ENCODE measurements at regions of chr1 and their contacts with region 1.

Region 1: GRCh38 chr1:115275212-115275611 is 62.8 kb downstream of the NGF start:
- DNase-seq: no peak
- H3K4me3 ChIP-seq: no peak overlapping the region
- H3K27ac ChIP-seq: no peak overlapping the region
- H3K4me1 ChIP-seq: no peaks in the 10 kb centered on the region
- H3K27me3 ChIP-seq: no peaks in the 10 kb centered on the region
- CTCF ChIP-seq: peak in 2 of 3 experiments; percentile 44 to 67; a peak in 3 of 4 replicates
- EP300 ChIP-seq: no peak
- POLR2A ChIP-seq: no peak
- RAD21 ChIP-seq: peak; percentile 75

Region 2: GRCh38 chr1:115296981-115297380 is 21.8 kb after region 1 on chr1:
- CTCF ChIA-PET with region 1: interaction called, 34 read pairs
- POLR2A ChIA-PET with region 1: no interaction called
- DNase-seq: no peak
- H3K4me3 ChIP-seq: no peak overlapping the region
- H3K27ac ChIP-seq: no peak overlapping the region
- H3K4me1 ChIP-seq: peaks cover 0 to 7% (median 3%) of the 10 kb centered on the region in 4 experiments; a peak in 3 of 7 replicates
- H3K27me3 ChIP-seq: 0 out of 7 replicates have a peak, but pooled peaks cover 0 to 1% (median 0%) of the 10 kb centered on the region in 4 experiments
- CTCF ChIP-seq: no peak
- EP300 ChIP-seq: no peak
- POLR2A ChIP-seq: no peak
- RAD21 ChIP-seq: no peak

Region 3: DNA sequence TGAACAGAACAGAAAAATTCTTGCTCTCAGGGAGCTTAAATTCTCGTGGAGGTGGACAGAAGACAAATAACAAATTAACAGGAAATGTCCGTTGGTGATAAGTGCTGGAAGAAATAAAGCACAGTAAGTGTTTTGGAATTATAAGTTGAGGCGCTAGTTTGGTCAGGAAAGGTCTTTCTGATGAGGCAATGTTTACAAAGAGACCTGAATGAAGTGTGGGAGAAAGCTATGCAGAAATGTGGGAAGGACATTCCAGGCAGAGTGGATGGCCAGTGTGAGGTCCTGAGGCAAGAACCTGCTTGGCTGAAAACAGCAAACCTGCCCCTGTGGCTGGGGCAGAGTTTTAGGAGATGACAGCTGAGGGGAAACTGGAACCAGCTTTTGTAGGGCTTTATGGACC is 39.6 kb after region 1 on chr1:
- CTCF ChIA-PET with region 1: interaction called, 11 read pairs
- POLR2A ChIA-PET with region 1: no interaction called
- DNase-seq: no peak
- H3K4me3 ChIP-seq: no peak overlapping the region
- H3K27ac ChIP-seq: no peak overlapping the region
- H3K4me1 ChIP-seq: no peaks in the 10 kb centered on the region
- H3K27me3 ChIP-seq: no peaks in the 10 kb centered on the region; a peak in 1 of 7 replicates
- CTCF ChIP-seq: no peak
- EP300 ChIP-seq: no peak
- POLR2A ChIP-seq: no peak
- RAD21 ChIP-seq: no peak

Region 4: GRCh38 chr1:115337633-115338456 is 62.6 kb after region 1 on chr1 and contains the start of gene NGF:
- CTCF ChIA-PET with region 1: interaction called, 12 read pairs
- POLR2A ChIA-PET with region 1: interaction called, 3 read pairs
- DNase-seq: peak; percentile 63 to 82
- H3K4me3 ChIP-seq: peak within 1 kb of the TSS; percentile 55 to 83 (median 72)
- H3K27ac ChIP-seq: no peak within 1 kb of the TSS
- H3K4me1 ChIP-seq: peaks cover 0 to 7% (median 0%) of the 10 kb centered on the region in 4 experiments; a peak in 4 of 7 replicates
- H3K27me3 ChIP-seq: peaks cover 7 to 38% (median 29%) of the 10 kb centered on the region in 4 experiments
- CTCF ChIP-seq: no peak
- EP300 ChIP-seq: no peak
- POLR2A ChIP-seq: peak in 1 of 2 experiments; percentile 55; a peak in 1 of 3 replicates
- RAD21 ChIP-seq: no peak
- total RNA-seq, gene NGF: 0.63 TPM in 1 of 2 replicates, not detected in the other

Region 5: DNA sequence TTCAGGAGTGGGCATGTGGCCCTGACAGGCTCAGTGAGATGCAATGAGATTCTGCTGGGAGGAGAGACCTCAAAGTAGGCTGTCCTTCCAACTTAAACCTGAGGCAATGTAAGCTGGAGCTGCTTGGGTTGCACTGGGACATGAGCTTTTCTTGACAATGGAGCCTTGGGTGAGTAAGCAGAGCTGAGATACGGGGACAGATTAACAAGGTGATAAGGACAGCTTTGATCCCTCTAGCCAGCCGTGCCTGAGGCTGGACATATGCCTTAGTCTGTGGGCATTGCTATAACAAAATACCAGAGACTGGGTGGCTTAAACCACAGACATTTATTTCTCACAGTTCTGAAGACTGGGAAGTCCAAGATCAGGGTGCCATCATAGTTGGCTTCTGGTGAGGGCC is 81.1 kb after region 1 on chr1:
- CTCF ChIA-PET with region 1: interaction called, 12 read pairs
- POLR2A ChIA-PET with region 1: no interaction called
- DNase-seq: no peak
- H3K4me3 ChIP-seq: no peak overlapping the region
- H3K27ac ChIP-seq: no peak overlapping the region
- H3K4me1 ChIP-seq: no peaks in the 10 kb centered on the region
- H3K27me3 ChIP-seq: no peaks in the 10 kb centered on the region
- CTCF ChIP-seq: no peak
- EP300 ChIP-seq: no peak
- POLR2A ChIP-seq: no peak
- RAD21 ChIP-seq: no peak

Region 6: DNA sequence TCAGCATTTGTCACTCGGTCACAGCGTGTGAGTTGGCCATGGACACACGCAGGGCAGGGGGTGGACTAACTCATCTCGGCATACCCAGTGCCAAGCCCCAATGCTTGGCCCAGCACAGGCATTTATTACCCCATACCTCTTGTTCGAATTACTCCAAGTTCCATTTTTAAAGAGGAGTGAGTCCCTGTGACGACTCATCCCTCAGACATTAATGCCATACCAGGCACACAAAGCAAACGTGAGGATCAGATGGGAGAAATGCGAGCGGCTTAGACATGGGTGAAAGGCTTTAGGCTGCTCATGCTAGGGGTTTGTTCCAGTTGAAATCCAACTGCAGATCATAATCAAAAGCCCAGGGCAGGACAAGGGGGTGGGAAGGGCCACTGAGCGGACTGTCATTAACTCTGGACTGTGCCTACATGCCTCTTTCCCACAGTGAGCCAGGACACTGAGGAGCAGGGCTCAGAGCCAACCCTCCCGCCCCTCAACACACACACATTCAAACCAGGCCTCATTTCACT is 181.3 kb after region 1 on chr1:
- CTCF ChIA-PET with region 1: interaction called, 10 read pairs
- POLR2A ChIA-PET with region 1: no interaction called
- DNase-seq: no peak
- H3K4me3 ChIP-seq: no peak overlapping the region
- H3K27ac ChIP-seq: no peak overlapping the region
- H3K4me1 ChIP-seq: no peaks in the 10 kb centered on the region
- H3K27me3 ChIP-seq: no peaks in the 10 kb centered on the region
- CTCF ChIP-seq: no peak
- EP300 ChIP-seq: no peak
- POLR2A ChIP-seq: no peak
- RAD21 ChIP-seq: no peak

Region 7: GRCh38 chr1:115469703-115470476 is 194.7 kb after region 1 on chr1:
- CTCF ChIA-PET with region 1: interaction called, 44 read pairs
- POLR2A ChIA-PET with region 1: no interaction called
- DNase-seq: peak; percentile 50 to 90
- H3K4me3 ChIP-seq: no peak overlapping the region
- H3K27ac ChIP-seq: no peak overlapping the region
- H3K4me1 ChIP-seq: no peaks in the 10 kb centered on the region
- H3K27me3 ChIP-seq: no peaks in the 10 kb centered on the region
- CTCF ChIP-seq: peak; percentile 96 to 100 (median 98)
- EP300 ChIP-seq: no peak
- POLR2A ChIP-seq: no peak
- RAD21 ChIP-seq: peak; percentile 99